ENCODE measurements at regions of chr1 and their contacts with region 1.

Region 1: DNA sequence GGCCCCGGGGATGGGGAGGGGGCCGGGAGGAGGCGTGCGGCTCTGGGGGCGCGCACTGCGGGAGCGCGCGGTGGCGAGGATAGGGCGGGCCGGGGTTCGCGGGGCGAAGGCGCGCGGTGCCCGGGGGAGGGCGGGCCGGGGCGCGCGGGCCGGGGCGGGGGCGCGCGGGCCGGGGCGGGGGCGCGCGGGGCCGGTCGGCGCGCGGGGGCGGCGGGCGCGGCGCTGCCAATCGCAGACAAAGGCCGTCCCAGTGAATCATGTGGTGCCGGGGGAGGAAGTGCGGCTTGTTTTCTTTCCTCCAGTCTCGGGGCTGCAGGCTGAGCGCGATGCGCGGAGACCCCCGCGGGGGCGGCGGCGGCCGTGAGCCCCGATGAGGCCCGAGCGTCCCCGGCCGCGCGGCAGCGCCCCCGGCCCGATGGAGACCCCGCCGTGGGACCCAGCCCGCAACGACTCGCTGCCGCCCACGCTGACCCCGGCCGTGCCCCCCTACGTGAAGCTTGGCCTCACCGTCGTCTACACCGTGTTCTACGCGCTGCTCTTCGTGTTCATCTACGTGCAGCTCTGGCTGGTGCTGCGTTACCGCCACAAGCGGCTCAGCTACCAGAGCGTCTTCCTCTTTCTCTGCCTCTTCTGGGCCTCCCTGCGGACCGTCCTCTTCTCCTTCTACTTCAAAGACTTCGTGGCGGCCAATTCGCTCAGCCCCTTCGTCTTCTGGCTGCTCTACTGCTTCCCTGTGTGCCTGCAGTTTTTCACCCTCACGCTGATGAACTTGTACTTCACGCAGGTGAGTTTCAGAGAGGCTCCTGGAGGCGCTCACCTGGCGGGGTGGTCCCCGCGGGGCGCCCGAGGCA is at the start of gene GPR137B:
- DNase-seq: peak in 8 of 9 experiments; percentile 40 to 81 (median 64)
- ATAC-seq: peak; percentile 74
- H3K4me3 ChIP-seq: peak within 1 kb of the TSS; percentile 75 to 81
- H3K4me3 Mint-ChIP-seq: peak within 1 kb of the TSS; percentile 96
- H3K27ac ChIP-seq: peak within 1 kb of the TSS; percentile 43 to 53
- H3K27ac Mint-ChIP-seq: peak within 1 kb of the TSS; percentile 84
- H3K4me1 ChIP-seq: peaks cover 27% of the 10 kb centered on the region
- H3K4me1 Mint-ChIP-seq: peaks cover 38% of the 10 kb centered on the region
- H3K27me3 ChIP-seq: peaks cover 0 to 2% of the 10 kb centered on the region in 2 experiments
- H3K27me3 Mint-ChIP-seq: peaks cover 6% of the 10 kb centered on the region
- CTCF ChIP-seq: no peak
- total RNA-seq, gene GPR137B: 11.1 to 15.3 TPM

Region 2: GRCh38 chr1:234478481-234479309 is 1663.8 kb before region 1 on chr1 and contains the start of gene TARBP1:
- CTCF ChIA-PET with region 1: no interaction called
- POLR2A ChIA-PET with region 1: no interaction called
- intact Hi-C with region 1: loop called in 1 of 2 experiments (anchors 10 kb)
- DNase-seq: peak; percentile 53 to 91 (median 72)
- ATAC-seq: peak; percentile 69
- H3K4me3 ChIP-seq: peak within 1 kb of the TSS; percentile 64 to 85
- H3K4me3 Mint-ChIP-seq: peak within 1 kb of the TSS; percentile 90
- H3K27ac ChIP-seq: peak within 1 kb of the TSS; percentile 71 to 75
- H3K27ac Mint-ChIP-seq: peak within 1 kb of the TSS; percentile 96
- H3K4me1 ChIP-seq: peaks cover 33% of the 10 kb centered on the region
- H3K4me1 Mint-ChIP-seq: peaks cover 42% of the 10 kb centered on the region
- H3K27me3 ChIP-seq: no peaks in the 10 kb centered on the region
- H3K27me3 Mint-ChIP-seq: peaks cover 2% of the 10 kb centered on the region
- CTCF ChIP-seq: no peak
- total RNA-seq, gene TARBP1: 38.2 to 39.5 TPM

Region 3: GRCh38 chr1:235030919-235031596 is 1111.4 kb before region 1 on chr1:
- CTCF ChIA-PET with region 1: no interaction called
- POLR2A ChIA-PET with region 1: no interaction called
- intact Hi-C with region 1: no loop called
- DNase-seq: no peak
- ATAC-seq: no peak
- H3K4me3 ChIP-seq: no peak overlapping the region
- H3K4me3 Mint-ChIP-seq: no peak overlapping the region
- H3K27ac ChIP-seq: no peak overlapping the region
- H3K27ac Mint-ChIP-seq: no peak overlapping the region
- H3K4me1 ChIP-seq: no peaks in the 10 kb centered on the region
- H3K4me1 Mint-ChIP-seq: peaks cover 2% of the 10 kb centered on the region
- H3K27me3 ChIP-seq: no peaks in the 10 kb centered on the region
- H3K27me3 Mint-ChIP-seq: no peaks in the 10 kb centered on the region
- CTCF ChIP-seq: no peak

Region 4: DNA sequence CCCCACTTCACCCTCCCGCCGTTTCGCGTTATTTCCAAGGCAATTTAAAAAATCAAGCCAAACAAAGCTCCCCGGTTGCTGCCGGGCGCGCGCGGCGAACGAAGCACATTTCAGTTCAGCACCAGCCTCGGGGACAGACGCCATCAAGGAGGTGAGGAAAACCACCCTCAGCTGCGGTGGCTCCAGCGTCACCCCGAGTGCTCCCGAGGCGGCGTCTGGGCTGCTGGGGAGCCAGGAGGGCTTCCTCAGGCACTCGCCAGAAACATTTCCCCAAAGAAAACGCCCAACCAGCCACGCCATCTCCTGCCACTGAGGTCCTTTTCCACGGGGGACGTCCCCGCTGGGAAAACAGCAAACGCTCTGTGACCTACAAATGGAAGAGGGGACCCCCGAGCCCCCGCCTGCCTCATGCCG is 493.5 kb before region 1 on chr1:
- CTCF ChIA-PET with region 1: no interaction called
- POLR2A ChIA-PET with region 1: no interaction called
- intact Hi-C with region 1: loop called in 1 of 2 experiments (anchors 5 kb)
- DNase-seq: peak; percentile 20 to 86 (median 61)
- ATAC-seq: peak; percentile 74
- H3K4me3 ChIP-seq: peak overlapping the region; percentile 24 to 35
- H3K4me3 Mint-ChIP-seq: peak overlapping the region; percentile 85
- H3K27ac ChIP-seq: no peak overlapping the region
- H3K27ac Mint-ChIP-seq: peak overlapping the region; percentile 83
- H3K4me1 ChIP-seq: peaks cover 19% of the 10 kb centered on the region
- H3K4me1 Mint-ChIP-seq: peaks cover 13% of the 10 kb centered on the region
- H3K27me3 ChIP-seq: peaks cover 10 to 25% of the 10 kb centered on the region in 2 experiments
- H3K27me3 Mint-ChIP-seq: peaks cover 58% of the 10 kb centered on the region
- CTCF ChIP-seq: no peak

Region 5: DNA sequence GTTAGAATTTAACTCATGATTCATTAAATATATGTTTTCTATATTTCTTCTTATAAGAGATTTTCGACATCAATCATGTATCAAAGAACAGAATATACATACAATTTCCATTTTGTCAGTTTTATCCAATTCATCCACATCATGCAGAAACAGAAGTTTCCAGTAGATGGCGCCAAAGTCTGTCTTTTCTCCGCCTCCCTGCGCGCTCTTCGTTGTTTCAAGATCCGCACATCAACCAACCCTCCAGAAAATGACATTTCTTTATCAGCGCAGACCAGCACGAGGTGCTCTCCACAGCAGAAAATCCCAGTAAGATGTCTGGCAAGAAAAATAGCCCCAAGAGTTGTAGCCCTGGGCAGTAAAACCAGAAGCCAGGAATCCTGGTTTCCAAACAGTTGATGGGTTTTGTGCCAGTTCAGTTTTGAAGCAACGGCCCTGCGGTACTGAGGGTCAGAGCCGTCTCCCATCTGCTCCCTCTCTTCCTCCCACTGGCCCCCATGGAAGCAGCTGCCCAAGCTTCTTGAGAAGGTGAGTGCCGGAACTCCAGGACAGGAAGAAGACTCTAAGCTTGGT is 38.7 kb before region 1 on chr1:
- CTCF ChIA-PET with region 1: no interaction called
- POLR2A ChIA-PET with region 1: no interaction called
- intact Hi-C with region 1: no loop called
- DNase-seq: peak in 8 of 9 experiments; percentile 30 to 74 (median 61)
- ATAC-seq: peak; percentile 74
- H3K4me3 ChIP-seq: no peak overlapping the region
- H3K4me3 Mint-ChIP-seq: no peak overlapping the region
- H3K27ac ChIP-seq: no peak overlapping the region
- H3K27ac Mint-ChIP-seq: no peak overlapping the region
- H3K4me1 ChIP-seq: no peaks in the 10 kb centered on the region
- H3K4me1 Mint-ChIP-seq: peaks cover 2% of the 10 kb centered on the region
- H3K27me3 ChIP-seq: no peaks in the 10 kb centered on the region
- H3K27me3 Mint-ChIP-seq: no peaks in the 10 kb centered on the region
- CTCF ChIP-seq: peak; percentile 88

Region 6: GRCh38 chr1:236281654-236282424 is 139.4 kb after region 1 on chr1 and contains the start of gene ERO1B:
- CTCF ChIA-PET with region 1: no interaction called
- POLR2A ChIA-PET with region 1: interaction called, 3 read pairs
- intact Hi-C with region 1: loop called (anchors 1 to 5 kb)
- DNase-seq: peak; percentile 96 to 99 (median 97)
- ATAC-seq: peak; percentile 93
- H3K4me3 ChIP-seq: peak within 1 kb of the TSS; percentile 75 to 90
- H3K4me3 Mint-ChIP-seq: peak within 1 kb of the TSS; percentile 97
- H3K27ac ChIP-seq: peak within 1 kb of the TSS; percentile 72 to 85
- H3K27ac Mint-ChIP-seq: peak within 1 kb of the TSS; percentile 92
- H3K4me1 ChIP-seq: peaks cover 28% of the 10 kb centered on the region
- H3K4me1 Mint-ChIP-seq: peaks cover 52% of the 10 kb centered on the region
- H3K27me3 ChIP-seq: no peaks in the 10 kb centered on the region
- H3K27me3 Mint-ChIP-seq: no peaks in the 10 kb centered on the region
- CTCF ChIP-seq: no peak
- total RNA-seq, gene ERO1B: 16.2 to 16.6 TPM

Measured in CD8-positive, alpha-beta T cell (primary cell).